ENCODE measurements at regions of chr1 and their contacts with region 1.

Region 1: DNA sequence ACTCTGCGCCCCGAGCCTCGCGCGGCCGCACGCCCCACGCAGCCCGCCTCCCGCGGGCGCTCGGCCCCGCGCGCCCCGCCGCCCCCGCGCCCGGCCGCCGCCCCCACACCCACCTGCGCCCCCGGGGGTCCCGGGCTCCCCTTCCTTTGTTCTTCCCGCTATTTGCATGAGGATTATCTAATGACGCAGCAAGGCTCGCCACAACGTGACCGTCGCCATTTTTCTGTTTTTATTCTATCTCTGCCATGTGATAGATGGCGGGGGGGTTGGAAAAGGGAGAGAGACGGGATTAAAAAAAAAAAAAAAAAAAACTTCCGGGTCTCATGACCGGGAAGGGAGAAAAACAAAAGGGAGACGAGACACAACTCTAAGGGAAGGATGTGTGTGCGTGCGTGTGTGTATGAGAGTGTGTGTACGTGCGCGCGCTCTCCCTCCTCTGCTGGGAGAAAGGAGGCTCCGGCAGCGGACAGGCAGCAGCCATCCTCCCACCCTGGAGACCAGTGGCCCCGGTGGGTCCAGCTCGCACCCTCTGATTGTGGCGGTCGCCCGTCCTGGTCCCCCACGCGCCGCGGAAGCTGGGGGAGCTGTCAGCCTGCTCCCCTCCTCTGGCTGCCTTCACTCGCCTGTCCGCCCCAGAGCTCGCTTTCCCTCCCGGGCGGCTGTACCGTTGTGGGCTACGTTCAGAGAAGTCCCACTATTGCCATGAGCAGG is 80.4 kb upstream of the AK4 start:
- DNase-seq: peak; percentile 66 to 86
- ATAC-seq: peak; percentile 30 to 70 (median 62)
- H3K4me3 ChIP-seq: peak overlapping the region; percentile 69 to 99 (median 87)
- H3K27ac ChIP-seq: peak overlapping the region; percentile 97 to 100 (median 99)
- H3K4me1 ChIP-seq: peaks cover 3 to 43% (median 40%) of the 10 kb centered on the region in 9 donors
- H3K27me3 ChIP-seq: no peaks in the 10 kb centered on the region
- CTCF ChIP-seq: no peak

Region 2: GRCh38 chr1:64877151-64877550 is 190.5 kb before region 1 on chr1:
- intact Hi-C with region 1: loop called in 2 of 10 experiments (anchors 5 kb)
- DNase-seq: no peak
- ATAC-seq: no peak
- H3K4me3 ChIP-seq: no peak overlapping the region
- H3K27ac ChIP-seq: peak overlapping the region in 1 of 10 donors; percentile 22
- H3K4me1 ChIP-seq: peaks cover 0 to 57% (median 25%) of the 10 kb centered on the region in 9 donors
- H3K27me3 ChIP-seq: no peaks in the 10 kb centered on the region
- CTCF ChIP-seq: no peak

Region 3: DNA sequence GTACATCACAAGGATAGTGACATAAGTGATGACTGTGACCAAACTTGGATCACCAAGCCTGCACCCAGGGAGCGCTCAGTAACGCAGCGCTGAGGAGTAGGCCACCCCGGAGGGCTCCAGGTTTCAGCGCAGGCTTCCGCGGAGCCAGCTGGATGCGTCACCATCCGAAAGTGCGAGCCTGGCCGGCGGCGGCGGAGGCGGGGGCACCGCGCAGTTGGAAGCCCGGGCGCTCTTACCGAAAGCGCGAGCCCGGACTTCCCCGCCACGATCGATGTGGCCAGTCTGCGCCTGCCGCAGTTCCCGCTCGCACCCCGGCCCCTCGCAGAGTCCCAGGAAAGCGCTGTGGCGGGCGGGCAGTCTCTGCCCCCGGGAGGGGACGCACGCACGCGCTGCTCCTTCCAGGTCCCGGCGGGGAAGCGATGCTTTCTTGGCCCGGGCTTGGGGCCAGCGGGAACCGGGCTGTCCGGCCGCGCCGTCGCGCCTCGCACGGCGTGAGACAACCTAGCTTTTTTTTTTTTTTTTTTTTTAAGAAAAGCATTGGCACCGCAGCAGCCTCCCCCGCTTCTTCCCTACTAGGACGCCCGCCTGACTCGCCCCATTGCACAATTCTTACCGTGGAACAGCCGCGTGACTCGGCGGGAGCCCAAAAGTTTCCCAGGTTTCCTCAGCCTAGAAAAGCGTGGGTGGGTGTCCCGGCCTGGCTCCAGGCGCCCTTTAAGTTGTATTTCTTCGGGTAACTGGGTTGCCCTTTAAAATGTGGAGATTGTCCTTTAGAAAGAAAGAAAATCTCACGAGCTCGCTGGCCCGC is 64.9 kb before region 1 on chr1:
- intact Hi-C with region 1: loop called in 1 of 10 experiments (anchors 5 kb)
- DNase-seq: peak; percentile 81 to 83
- ATAC-seq: peak; percentile 84 to 95 (median 88)
- H3K4me3 ChIP-seq: peak overlapping the region; percentile 40 to 79 (median 64)
- H3K27ac ChIP-seq: peak overlapping the region; percentile 57 to 97 (median 92)
- H3K4me1 ChIP-seq: peaks cover 5 to 31% (median 19%) of the 10 kb centered on the region in 9 donors
- H3K27me3 ChIP-seq: no peaks in the 10 kb centered on the region
- CTCF ChIP-seq: no peak

Region 4: GRCh38 chr1:65090403-65090802 is 22.8 kb after region 1 on chr1:
- intact Hi-C with region 1: no loop called
- DNase-seq: no peak
- ATAC-seq: no peak
- H3K4me3 ChIP-seq: no peak overlapping the region
- H3K27ac ChIP-seq: no peak overlapping the region
- H3K4me1 ChIP-seq: no peaks in the 10 kb centered on the region
- H3K27me3 ChIP-seq: no peaks in the 10 kb centered on the region
- CTCF ChIP-seq: no peak

Region 5: DNA sequence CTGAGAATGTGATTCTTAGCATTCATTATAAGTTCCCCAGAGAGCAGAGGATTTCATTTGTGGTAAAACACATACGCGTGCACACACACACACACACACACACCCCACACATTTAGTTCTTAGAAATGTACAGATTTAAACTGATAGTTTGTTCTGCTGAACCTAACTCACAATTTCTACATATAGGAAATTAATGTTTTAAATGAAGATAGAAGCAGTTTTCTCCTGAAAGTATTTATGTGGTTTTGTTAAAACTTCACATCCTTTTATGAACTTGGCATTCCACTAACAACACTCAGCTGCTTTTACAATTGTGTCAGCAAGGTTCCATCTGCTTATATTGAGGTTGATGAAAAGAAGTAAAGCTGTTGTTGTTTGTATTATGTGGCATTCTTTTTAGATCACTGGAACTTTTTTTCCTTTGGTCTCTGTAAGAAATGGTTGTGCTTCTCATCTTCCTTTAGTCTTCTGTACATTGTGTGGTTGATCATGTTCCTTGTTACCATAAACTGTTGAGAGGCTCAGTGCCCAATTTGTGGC is 122.0 kb after region 1 on chr1:
- intact Hi-C with region 1: loop called in 1 of 10 experiments (anchors 5 kb)
- DNase-seq: no peak
- ATAC-seq: no peak
- H3K4me3 ChIP-seq: no peak overlapping the region
- H3K27ac ChIP-seq: no peak overlapping the region
- H3K4me1 ChIP-seq: peaks cover 0 to 19% (median 5%) of the 10 kb centered on the region in 9 donors
- H3K27me3 ChIP-seq: no peaks in the 10 kb centered on the region
- CTCF ChIP-seq: no peak

Region 6: GRCh38 chr1:65209005-65209885 is 141.6 kb after region 1 on chr1:
- intact Hi-C with region 1: loop called in 7 of 10 experiments (anchors 5 kb)
- DNase-seq: peak in 1 of 2 donors; percentile 63
- ATAC-seq: peak; percentile 31 to 71 (median 60)
- H3K4me3 ChIP-seq: peak overlapping the region in 1 of 10 donors; percentile 11
- H3K27ac ChIP-seq: peak overlapping the region in 3 of 10 donors; percentile 17 to 51 (median 23)
- H3K4me1 ChIP-seq: peaks cover 0 to 31% (median 15%) of the 10 kb centered on the region in 9 donors
- H3K27me3 ChIP-seq: no peaks in the 10 kb centered on the region
- CTCF ChIP-seq: peak; percentile 36 to 82 (median 71)

Region 7: DNA sequence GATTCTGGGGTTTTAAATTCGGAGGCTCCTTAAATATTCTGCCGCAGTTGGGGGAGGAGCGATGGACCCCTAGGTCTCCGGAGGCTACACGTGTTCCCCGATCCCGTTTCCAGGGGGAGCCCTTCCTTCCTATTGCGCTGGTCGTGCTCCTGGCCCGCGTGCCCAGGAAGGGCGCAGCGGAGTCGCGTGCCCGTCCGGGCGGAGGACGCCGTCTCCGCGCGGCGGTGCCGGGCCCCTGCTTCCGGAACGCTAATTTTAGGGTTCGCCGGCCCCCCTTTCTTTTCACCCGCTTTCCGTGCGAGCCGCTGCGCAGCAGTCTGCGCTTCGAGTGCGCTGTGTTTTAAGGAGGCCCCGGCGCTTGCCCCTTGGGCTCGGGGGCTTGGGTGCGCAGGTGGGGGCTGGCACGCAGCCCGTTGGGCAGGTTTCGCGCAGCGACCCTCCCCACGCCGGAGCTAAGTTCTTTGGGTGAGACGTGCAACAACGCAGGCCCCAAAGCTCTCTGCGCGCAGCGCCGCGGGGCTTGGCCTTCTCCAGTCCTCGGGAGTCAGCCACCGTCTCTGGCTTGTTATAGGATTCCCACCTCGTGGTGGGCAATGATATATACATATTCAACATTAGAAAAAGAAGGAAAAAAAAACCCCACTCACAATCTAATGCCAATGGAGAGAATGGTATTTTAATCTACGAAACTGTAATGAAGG is 198.2 kb after region 1 on chr1:
- intact Hi-C with region 1: no loop called
- DNase-seq: peak; percentile 45 to 48
- ATAC-seq: peak; percentile 77 to 97 (median 93)
- H3K4me3 ChIP-seq: peak overlapping the region; percentile 47 to 73 (median 62)
- H3K27ac ChIP-seq: peak overlapping the region in 9 of 10 donors; percentile 53 to 77 (median 63)
- H3K4me1 ChIP-seq: peaks cover 0 to 24% (median 20%) of the 10 kb centered on the region in 9 donors
- H3K27me3 ChIP-seq: peaks cover 0 to 23% (median 7%) of the 10 kb centered on the region in 7 donors
- CTCF ChIP-seq: peak in 6 of 9 donors; percentile 24 to 53 (median 40)

Region 8: GRCh38 chr1:65687428-65688214 is 620.0 kb after region 1 on chr1:
- intact Hi-C with region 1: loop called in 4 of 10 experiments (anchors 10 kb)
- DNase-seq: peak; percentile 81 to 88
- ATAC-seq: peak; percentile 68 to 95 (median 90)
- H3K4me3 ChIP-seq: no peak overlapping the region
- H3K27ac ChIP-seq: peak overlapping the region in 1 of 10 donors; percentile 31
- H3K4me1 ChIP-seq: peaks cover 0 to 33% (median 26%) of the 10 kb centered on the region in 9 donors
- H3K27me3 ChIP-seq: peaks cover 0 to 7% (median 0%) of the 10 kb centered on the region in 7 donors
- CTCF ChIP-seq: peak; percentile 91 to 99 (median 96)